Adrenal gland (tissue), 19 donors: ENCODE measurements at regions of chr22 and their contacts with region 1.

Region 1: DNA sequence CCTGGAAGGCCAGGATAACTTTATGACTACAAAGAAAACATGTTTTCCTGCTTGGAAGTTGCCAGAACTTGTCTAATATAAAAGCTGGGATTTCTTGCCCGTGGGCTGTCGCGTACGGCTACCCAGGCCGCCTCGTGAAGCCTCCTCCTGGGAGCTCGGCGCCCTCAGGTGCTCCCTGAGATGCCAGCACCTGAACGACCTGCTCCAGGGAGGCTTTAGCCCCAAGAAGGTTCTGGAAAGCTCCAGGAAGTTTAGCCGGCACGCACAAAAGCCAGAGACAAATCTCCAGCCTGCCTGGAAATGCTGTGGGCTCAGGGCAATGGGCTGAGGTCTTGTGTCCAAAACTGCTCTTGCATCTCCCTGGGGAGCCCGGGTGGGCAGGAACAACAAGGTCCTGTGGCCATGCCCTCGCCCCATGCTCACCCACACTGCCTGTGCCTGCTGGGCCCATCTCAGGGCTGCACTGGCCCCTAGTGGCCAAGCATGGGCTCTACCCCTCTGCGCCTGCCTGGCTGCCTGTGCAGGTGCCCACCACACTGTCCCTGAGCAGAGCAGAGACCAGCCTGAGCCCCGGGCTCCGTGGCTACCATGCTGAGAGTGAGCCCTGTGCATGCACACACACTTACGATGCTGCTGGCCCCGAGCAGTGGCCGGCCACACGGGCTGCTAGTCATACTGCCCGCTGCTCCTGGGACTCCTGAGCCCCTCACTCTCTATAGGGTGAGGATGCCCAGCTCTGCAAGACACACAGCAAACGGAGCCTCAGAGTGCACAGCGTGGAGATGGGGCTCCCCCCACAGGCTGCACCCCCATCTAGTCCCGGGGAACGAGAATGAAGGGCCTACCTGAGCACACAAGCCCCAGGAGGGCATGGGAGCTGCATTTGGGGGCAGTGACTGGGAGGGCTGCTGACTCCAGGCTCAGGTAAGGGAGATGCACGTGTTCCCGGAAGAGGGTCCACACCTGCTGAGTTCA is 4.9 kb upstream of the CELSR1 start:
- DNase-seq: peak; percentile 70 to 84 (median 78)
- H3K4me3 ChIP-seq: no peak overlapping the region
- H3K27ac ChIP-seq: no peak overlapping the region
- H3K4me1 ChIP-seq: peaks cover 7 to 17% of the 10 kb centered on the region in 2 donors
- H3K27me3 ChIP-seq: peaks cover 21% of the 10 kb centered on the region
- CTCF ChIP-seq: peak; percentile 87 to 96 (median 90)
- POLR2A ChIP-seq: no peak

Region 2: DNA sequence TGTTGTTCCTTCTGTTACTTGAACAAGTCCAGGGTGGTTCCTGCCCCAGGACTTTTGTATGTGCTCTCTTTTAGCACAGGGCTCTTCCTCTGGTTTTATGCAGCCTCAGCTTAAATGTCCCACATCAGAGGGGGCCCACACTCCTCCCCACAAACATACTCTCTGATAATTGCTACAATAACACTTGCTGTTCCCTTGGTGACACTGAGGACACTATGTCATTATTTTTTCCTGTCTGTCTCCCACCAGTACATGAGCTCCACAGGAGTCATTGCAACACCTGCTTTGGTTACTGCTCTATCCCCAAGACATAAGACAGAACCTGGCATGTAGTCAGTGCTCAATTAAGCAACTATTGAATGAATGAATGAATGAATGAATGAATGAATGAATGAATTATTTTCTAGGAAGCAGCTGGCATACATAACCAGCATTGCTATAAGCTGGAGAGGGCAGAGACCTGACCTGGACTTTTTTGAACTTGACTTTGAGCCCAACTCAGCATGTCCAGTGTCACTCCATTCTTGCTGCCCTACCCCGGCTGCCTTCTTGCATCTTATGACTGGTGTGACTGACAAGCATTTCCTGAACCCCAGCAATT is 557.9 kb before region 1 on chr22:
- intact Hi-C with region 1: loop called in 1 of 2 experiments (anchors 10 kb)
- DNase-seq: no peak
- H3K4me3 ChIP-seq: no peak overlapping the region
- H3K27ac ChIP-seq: no peak overlapping the region
- H3K4me1 ChIP-seq: no peaks in the 10 kb centered on the region
- H3K27me3 ChIP-seq: no peaks in the 10 kb centered on the region
- CTCF ChIP-seq: no peak
- POLR2A ChIP-seq: no peak

Region 3: DNA sequence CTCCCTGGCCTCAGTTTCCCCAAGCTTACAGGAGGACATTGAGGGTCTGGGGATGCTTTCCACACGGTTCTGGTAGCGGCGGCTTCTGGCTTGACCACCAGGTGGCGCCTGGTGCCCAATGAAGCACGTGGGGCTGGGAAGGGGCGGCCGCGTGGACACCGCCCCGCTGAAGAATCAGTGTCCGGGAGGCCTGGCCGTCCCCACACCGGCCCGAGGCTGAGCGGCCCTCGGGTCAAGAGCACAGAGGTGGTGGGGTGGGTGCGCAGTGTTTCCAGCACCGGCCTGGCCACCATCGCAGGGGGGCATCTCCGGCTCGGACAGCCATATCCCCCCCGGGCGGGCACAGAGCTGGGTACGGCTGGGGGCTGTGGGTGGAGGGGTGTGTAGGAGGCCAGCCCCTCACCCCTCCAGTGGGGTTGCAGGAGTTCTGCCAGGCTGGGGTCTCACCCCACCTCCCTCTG is 419.8 kb before region 1 on chr22:
- intact Hi-C with region 1: loop called (anchors 5 kb)
- DNase-seq: peak; percentile 66 to 89 (median 81)
- H3K4me3 ChIP-seq: no peak overlapping the region
- H3K27ac ChIP-seq: no peak overlapping the region
- H3K4me1 ChIP-seq: peaks cover 5 to 18% of the 10 kb centered on the region in 2 donors
- H3K27me3 ChIP-seq: no peaks in the 10 kb centered on the region
- CTCF ChIP-seq: peak; percentile 92 to 97 (median 94)
- POLR2A ChIP-seq: no peak

Region 4: GRCh38 chr22:46131151-46131587 is 411.1 kb before region 1 on chr22:
- intact Hi-C with region 1: loop called in 1 of 2 experiments (anchors 5 kb)
- DNase-seq: no peak
- H3K4me3 ChIP-seq: no peak overlapping the region
- H3K27ac ChIP-seq: no peak overlapping the region
- H3K4me1 ChIP-seq: peaks cover 25% of the 10 kb centered on the region in 2 donors
- H3K27me3 ChIP-seq: no peaks in the 10 kb centered on the region
- CTCF ChIP-seq: peak in 1 of 6 experiments; percentile 14
- POLR2A ChIP-seq: no peak

Region 5: DNA sequence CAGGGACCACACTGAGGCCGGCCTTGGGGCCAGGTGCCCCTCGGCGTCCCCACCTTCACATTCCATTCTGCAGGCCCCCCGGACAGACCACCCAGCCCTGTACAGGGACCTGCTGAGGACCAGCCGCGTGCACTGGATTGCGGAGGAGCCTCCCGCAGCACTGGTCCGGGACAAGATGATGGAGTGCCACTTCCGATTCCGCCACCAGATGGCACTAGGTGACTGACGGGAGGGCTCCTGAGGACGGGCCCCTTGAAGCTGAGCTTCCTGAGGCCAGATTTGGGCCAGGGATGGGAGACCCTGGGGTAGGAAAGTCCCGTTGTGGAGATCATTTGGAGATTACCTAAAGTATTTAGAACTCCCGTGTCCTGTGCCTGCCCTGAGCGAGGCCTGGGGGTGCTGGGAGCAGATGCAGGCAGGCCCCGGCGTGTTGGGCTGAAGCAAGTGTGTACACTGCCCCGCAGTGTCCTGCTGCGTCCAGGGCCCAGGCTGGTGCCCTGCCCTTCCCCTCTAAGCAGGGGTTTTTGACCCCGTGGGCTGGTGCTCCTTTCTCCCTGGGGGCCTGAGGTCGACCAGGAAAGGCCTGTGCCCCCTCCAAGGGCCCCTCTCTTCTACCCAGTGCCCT is 186.8 kb before region 1 on chr22:
- intact Hi-C with region 1: loop called in 1 of 2 experiments (anchors 5 kb)
- DNase-seq: peak; percentile 55 to 81 (median 66)
- H3K4me3 ChIP-seq: no peak overlapping the region
- H3K27ac ChIP-seq: no peak overlapping the region
- H3K4me1 ChIP-seq: peaks cover 0 to 18% of the 10 kb centered on the region in 2 donors
- H3K27me3 ChIP-seq: no peaks in the 10 kb centered on the region
- CTCF ChIP-seq: peak; percentile 50 to 69 (median 63)
- POLR2A ChIP-seq: no peak

Region 6: GRCh38 chr22:46367707-46368191 is 174.5 kb before region 1 on chr22:
- intact Hi-C with region 1: loop called (anchors 2 to 5 kb)
- DNase-seq: peak; percentile 56 to 87 (median 74)
- H3K4me3 ChIP-seq: no peak overlapping the region
- H3K27ac ChIP-seq: no peak overlapping the region
- H3K4me1 ChIP-seq: no peaks in the 10 kb centered on the region
- H3K27me3 ChIP-seq: peaks cover 5% of the 10 kb centered on the region
- CTCF ChIP-seq: peak; percentile 82 to 96 (median 91)
- POLR2A ChIP-seq: no peak

Region 7: DNA sequence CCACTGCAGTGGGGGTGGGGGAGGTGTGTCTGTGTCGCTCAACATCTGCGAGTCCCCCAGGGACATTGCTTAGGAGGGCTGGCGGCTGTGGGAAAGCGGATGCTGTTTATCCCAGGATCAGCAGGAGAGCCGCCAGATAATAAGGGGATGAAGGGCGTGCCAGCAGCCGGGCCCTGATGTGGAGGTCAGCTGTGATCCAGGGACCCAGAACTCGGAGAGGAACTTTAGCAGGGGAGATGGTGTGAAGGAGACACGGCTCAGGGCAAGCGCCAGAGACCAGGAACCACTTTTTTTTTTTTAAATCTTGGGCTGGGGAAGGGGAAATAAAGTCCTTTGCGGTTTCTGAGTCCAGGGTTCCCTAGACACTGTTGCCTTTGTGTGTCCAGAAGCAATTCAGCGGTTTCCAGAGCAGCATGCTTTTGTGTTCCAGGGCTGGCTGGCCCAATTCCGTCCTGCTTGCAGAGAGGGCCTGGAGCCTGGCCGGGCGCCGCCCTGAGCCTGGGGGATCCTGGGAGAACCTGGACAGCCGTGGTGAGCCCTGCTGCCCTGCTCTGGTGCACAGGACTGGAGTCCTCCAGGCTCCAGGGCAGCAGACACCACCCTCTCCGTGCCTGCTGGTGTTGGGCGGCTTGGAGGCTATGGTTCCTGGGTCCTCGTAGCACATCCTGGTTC is 77.7 kb after region 1 on chr22 and contains the start of gene GRAMD4:
- intact Hi-C with region 1: no loop called
- DNase-seq: peak in 2 of 7 donors; percentile 16 to 41
- H3K4me3 ChIP-seq: no peak within 1 kb of the TSS
- H3K27ac ChIP-seq: peak within 1 kb of the TSS in 2 of 5 donors; percentile 47 to 72
- H3K4me1 ChIP-seq: peaks cover 5 to 24% of the 10 kb centered on the region in 2 donors
- H3K27me3 ChIP-seq: no peaks in the 10 kb centered on the region
- CTCF ChIP-seq: no peak
- POLR2A ChIP-seq: no peak
- total RNA-seq, gene GRAMD4: 15.0 to 241 (median 80.5) TPM